ENCODE measurements at regions of chr6 and their contacts with region 1.

Region 1: GRCh38 chr6:37702314-37702713 is 4.6 kb upstream of the MDGA1 start:
- DNase-seq: no peak
- H3K4me3 ChIP-seq: no peak overlapping the region
- H3K27ac ChIP-seq: no peak overlapping the region
- H3K4me1 ChIP-seq: peaks cover 0 to 6% of the 10 kb centered on the region in 2 donors
- H3K27me3 ChIP-seq: peaks cover 0 to 5% of the 10 kb centered on the region in 2 donors
- CTCF ChIP-seq: no peak
- POLR2A ChIP-seq: no peak

Region 2: GRCh38 chr6:37083243-37084138 is 618.8 kb before region 1 on chr6:
- intact Hi-C with region 1: loop called (anchors 5 kb)
- DNase-seq: peak; percentile 58 to 83
- H3K4me3 ChIP-seq: no peak overlapping the region
- H3K27ac ChIP-seq: peak overlapping the region; percentile 63 to 78
- H3K4me1 ChIP-seq: no peaks in the 10 kb centered on the region
- H3K27me3 ChIP-seq: no peaks in the 10 kb centered on the region
- CTCF ChIP-seq: no peak
- POLR2A ChIP-seq: no peak

Region 3: DNA sequence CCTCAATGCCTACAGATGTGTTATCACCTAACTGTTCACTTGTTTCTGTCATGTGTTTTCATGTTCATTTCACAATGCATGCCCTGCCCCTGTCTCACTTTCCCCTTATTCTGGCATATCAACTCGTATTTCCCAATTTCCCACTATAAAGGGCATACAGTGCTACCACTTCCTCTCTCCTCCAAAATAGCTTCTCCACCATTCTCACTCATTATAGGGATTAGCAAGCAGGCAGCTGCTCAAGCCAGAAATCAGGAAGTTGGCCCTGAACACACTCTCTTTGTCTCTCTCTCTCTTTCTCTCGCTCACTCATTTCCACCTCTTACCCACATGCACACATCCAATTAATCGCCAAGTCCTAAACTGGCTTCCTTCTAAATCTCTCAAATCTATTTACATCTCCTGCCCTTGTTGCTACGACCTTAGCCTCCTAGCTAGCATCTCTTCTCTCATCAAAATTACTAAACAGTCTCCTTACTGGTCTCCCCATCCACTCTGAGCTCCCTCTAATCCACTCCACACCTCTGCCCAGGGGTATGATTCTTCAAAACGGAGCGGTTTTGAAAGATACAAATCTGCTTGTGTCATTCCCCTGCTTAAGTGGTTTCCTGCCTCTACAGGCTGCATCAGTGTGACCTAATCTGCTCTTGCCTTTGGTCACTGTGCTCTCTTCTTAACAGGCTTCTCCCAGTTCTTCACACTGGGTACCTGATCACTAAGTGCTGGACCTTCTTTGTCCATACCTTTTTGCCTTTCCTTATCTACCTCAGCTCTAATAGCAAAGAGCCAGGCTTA is 741.2 kb after region 1 on chr6:
- intact Hi-C with region 1: no loop called
- DNase-seq: no peak
- H3K4me3 ChIP-seq: no peak overlapping the region
- H3K27ac ChIP-seq: no peak overlapping the region
- H3K4me1 ChIP-seq: no peaks in the 10 kb centered on the region
- H3K27me3 ChIP-seq: no peaks in the 10 kb centered on the region
- CTCF ChIP-seq: no peak
- POLR2A ChIP-seq: no peak

Measured in breast epithelium (tissue), 4 donors.